Activated naive CD4-positive, alpha-beta T cell treated with anti-CD3 and anti-CD28 coated beads for 36 hours (primary cell): ENCODE measurements at regions of chr7 and their contacts with region 1.

Region 1: DNA sequence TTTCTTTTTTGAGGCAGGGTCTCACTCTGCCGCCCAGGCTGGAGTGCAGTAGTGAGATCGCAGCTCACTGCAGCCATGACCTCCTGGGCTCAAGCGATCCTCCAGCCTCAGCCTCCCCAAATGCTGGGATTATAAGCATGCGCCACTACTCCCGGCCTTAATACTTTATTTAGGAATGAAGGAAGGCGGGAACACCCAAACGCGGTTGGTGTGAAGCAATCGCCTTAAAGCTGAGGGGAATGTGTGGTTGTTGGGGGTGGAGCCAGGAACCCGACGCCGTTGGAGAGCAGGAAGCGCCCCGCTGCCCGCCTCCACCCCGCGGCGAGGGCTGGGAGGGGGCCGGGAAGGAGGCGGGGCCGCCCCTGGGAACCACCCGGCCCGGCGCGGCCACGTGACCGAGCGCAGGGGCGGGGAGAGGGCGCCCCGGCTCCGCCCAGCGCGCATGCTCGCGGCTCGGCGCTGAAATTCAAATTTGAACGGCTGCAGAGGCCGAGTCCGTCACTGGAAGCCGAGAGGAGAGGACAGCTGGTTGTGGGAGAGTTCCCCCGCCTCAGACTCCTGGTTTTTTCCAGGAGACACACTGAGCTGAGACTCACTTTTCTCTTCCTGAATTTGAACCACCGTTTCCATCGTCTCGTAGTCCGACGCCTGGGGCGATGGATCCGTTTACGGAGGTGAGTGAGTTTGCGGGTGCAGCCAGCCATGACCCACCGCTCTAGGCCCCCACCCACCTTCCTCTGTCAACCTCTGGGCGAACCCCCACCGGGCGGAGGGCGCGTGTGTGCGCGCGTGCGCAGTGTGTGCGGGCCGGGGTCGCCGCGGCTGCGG is at the start of gene ANLN:
- DNase-seq: peak; percentile 85
- H3K4me3 Mint-ChIP-seq: peak within 1 kb of the TSS; percentile 87
- H3K27ac Mint-ChIP-seq: peak within 1 kb of the TSS; percentile 86
- H3K4me1 Mint-ChIP-seq: peaks cover 21% of the 10 kb centered on the region
- H3K27me3 Mint-ChIP-seq: peaks cover 10% of the 10 kb centered on the region
- total RNA-seq, gene ANLN: 62.4 to 64.8 TPM

Region 2: DNA sequence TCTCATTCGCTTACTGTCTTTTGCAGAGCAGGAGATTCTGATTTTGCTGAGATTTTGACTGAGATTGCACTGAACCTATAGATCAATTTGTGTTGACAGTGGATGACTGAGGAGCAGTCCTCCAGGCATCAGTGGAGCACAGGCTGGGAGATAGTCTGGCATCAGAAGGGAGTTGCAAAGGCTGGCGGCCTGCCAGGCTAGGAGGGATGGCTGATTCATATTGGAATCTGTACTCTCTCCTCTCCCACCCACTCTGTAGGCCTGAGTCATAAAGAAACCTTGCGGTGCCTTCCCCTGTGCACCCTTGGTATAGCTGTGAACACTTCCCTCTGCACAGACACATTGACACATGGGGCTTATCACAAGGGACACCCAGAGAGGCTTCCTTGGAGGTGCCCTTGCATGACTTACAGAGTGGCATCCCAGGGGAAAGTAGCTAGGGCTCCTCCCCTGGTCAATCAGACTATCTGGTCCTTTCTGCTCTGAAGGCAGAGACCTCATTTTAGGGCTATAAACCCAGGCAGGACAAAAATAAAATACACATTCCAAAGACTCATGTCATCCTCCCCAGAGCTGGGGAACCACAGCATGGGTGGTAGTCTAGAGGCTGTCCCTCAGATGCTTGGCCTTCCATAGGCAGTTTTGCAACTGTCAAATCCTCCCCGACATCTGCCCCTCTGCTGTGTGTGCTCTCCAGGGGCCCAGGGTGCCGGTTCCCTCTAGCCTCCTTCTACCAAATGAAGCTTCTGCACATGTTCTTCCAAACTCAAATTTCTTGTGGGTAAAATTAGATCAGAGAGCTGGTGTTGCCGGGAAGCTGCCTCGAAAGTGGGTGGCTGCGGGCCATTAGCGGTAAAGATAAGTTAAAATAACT is 273.9 kb before region 1 on chr7:
- CTCF ChIA-PET with region 1: no interaction called
- intact Hi-C with region 1: loop called (anchors 2 kb)
- DNase-seq: peak; percentile 96
- H3K4me3 Mint-ChIP-seq: no peak overlapping the region
- H3K27ac Mint-ChIP-seq: no peak overlapping the region
- H3K4me1 Mint-ChIP-seq: peaks cover 27% of the 10 kb centered on the region
- H3K27me3 Mint-ChIP-seq: peaks cover 8% of the 10 kb centered on the region

Region 3: DNA sequence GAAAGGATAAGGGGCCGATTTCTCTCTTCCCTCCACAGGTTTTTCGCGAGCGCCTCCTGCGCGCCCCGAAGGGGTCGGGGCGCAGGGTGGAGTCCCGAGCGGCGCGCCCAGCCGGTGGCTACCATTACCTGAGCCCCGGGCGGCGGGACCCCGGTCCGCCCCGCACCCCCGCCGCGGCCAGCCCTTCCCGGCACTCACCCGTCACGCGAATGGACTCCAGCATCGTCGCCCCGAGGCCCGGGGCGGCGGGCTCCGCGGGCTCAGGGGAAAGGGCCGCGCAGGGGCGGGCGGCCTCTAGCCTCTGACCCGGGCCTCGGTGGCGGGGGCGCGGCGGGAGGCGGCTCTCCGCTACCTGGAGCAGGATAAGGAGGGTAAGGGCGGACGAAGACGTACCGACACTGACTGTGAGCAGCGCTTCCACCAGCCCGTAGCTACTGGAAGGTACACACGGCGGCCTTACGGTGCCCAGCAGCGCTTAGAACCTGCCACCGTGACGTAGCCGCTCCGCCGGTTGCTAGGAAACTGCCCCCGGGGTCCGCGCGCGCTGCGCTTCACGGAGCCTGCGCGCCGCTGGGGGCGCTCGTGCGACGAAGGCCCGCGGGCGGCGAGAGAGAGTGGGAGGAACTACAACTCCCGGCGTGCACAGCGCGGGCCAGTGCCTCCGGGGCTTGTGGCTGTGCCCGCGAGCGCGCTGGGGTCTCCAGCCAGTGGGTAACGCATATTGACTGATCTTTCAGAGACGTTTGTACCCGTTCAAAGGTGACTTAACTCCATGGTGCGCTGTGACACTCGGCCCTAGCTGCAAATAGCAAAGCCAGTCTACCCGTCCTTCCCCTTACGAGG is 22.6 kb before region 1 on chr7:
- CTCF ChIA-PET with region 1: interaction called, 14 read pairs
- intact Hi-C with region 1: loop called (anchors 1 kb)
- DNase-seq: peak; percentile 89
- H3K4me3 Mint-ChIP-seq: peak overlapping the region; percentile 86
- H3K27ac Mint-ChIP-seq: no peak overlapping the region
- H3K4me1 Mint-ChIP-seq: no peaks in the 10 kb centered on the region
- H3K27me3 Mint-ChIP-seq: peaks cover 2% of the 10 kb centered on the region

Region 4: DNA sequence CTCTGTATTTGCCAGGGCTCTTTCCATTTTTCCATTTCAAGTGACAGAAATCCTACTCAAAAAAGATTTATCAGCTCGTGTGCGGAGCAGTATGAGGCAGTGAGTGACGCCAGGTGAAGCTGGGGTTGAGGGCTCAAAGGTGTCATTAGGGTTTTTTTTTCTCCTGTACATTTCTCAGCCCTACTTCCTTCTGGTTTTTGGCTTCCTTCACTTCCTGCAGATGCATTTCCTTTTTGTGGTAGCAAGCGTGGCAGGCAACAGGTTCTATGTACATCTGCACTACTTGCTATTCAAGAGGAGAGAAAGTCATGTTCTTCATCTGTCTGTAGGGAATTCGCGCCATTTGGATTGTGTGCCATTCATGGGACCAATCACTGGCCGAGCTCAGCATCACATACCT is 387.5 kb after region 1 on chr7:
- CTCF ChIA-PET with region 1: no interaction called
- intact Hi-C with region 1: loop called (anchors 5 kb)
- DNase-seq: peak; percentile 46
- H3K4me3 Mint-ChIP-seq: peak overlapping the region; percentile 48
- H3K27ac Mint-ChIP-seq: no peak overlapping the region
- H3K4me1 Mint-ChIP-seq: peaks cover 68% of the 10 kb centered on the region
- H3K27me3 Mint-ChIP-seq: no peaks in the 10 kb centered on the region

Region 5: DNA sequence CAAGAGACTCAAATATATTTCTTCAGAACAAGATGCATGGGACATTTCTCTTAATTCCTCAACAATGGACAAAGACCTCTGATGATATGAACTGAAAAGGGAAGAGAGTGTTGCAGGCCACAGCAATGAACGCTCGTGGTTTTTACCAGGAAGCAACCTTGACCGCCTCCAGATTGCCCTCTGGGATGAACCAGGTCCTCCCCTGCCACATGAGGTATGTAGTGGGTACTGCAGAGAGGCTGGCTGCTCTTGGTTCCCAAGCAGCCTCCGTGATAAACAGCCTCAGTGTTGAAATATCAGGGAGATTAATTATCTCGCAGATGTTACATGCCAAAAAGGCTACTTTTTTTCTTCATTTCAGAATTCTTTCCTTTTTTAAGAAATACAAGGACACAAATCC is 720.3 kb after region 1 on chr7:
- CTCF ChIA-PET with region 1: no interaction called
- intact Hi-C with region 1: no loop called
- DNase-seq: no peak
- H3K4me3 Mint-ChIP-seq: no peak overlapping the region
- H3K27ac Mint-ChIP-seq: no peak overlapping the region
- H3K4me1 Mint-ChIP-seq: peaks cover 50% of the 10 kb centered on the region
- H3K27me3 Mint-ChIP-seq: no peaks in the 10 kb centered on the region

Region 6: GRCh38 chr7:38178004-38178694 is 1788.6 kb after region 1 on chr7 and contains the start of gene STARD3NL:
- CTCF ChIA-PET with region 1: no interaction called
- intact Hi-C with region 1: loop called (anchors 5 kb)
- DNase-seq: peak; percentile 96
- H3K4me3 Mint-ChIP-seq: peak within 1 kb of the TSS; percentile 94
- H3K27ac Mint-ChIP-seq: peak within 1 kb of the TSS; percentile 91
- H3K4me1 Mint-ChIP-seq: peaks cover 33% of the 10 kb centered on the region
- H3K27me3 Mint-ChIP-seq: peaks cover 9% of the 10 kb centered on the region
- total RNA-seq, gene STARD3NL: 23.7 to 25.7 TPM